ENCODE measurements at regions of chr16 and their contacts with region 1.

Region 1: DNA sequence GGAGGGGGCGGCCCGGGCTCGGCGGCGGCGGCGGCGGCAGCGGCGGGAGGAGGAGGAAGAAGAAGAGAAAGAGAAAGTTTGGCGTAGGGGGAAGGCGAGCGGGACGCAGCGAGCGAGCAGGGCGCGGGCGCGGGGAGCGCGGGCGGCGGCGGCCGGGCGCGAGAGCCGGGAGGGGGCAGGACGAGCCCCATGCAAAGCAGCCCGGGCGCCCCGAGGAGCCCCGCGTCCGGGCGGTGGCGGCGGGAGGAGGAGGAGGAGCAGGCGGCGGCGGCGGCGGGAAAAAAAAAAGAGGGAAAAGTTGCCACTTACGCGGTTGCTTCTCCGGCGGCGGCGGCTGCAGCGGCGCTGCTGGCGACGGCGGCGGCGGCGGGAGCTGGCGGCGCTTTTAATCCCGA is 10.3 kb upstream of the ZFHX3 start:
- DNase-seq: peak; percentile 54
- H3K4me3 ChIP-seq: peak overlapping the region; percentile 55 to 64 (median 61)
- H3K27ac ChIP-seq: no peak overlapping the region
- H3K4me1 ChIP-seq: peaks cover 47% of the 10 kb centered on the region
- H3K27me3 ChIP-seq: no peaks in the 10 kb centered on the region
- CTCF ChIP-seq: no peak

Region 2: GRCh38 chr16:72664509-72665225 is 393.6 kb before region 1 on chr16:
- CTCF ChIA-PET with region 1: no interaction called
- dilution Hi-C with region 1: no loop called
- in situ Hi-C with region 1: no loop called
- intact Hi-C with region 1: loop called (anchors 5 kb)
- DNase-seq: peak; percentile 98
- H3K4me3 ChIP-seq: peak overlapping the region; percentile 74 to 85 (median 81)
- H3K27ac ChIP-seq: peak overlapping the region; percentile 86
- H3K4me1 ChIP-seq: peaks cover 10% of the 10 kb centered on the region
- H3K27me3 ChIP-seq: no peaks in the 10 kb centered on the region
- CTCF ChIP-seq: no peak

Region 3: GRCh38 chr16:72894293-72895151 is 163.7 kb before region 1 on chr16:
- CTCF ChIA-PET with region 1: no interaction called
- dilution Hi-C with region 1: no loop called
- in situ Hi-C with region 1: no loop called
- intact Hi-C with region 1: no loop called
- DNase-seq: no peak
- H3K4me3 ChIP-seq: no peak overlapping the region
- H3K27ac ChIP-seq: no peak overlapping the region
- H3K4me1 ChIP-seq: peaks cover 5% of the 10 kb centered on the region
- H3K27me3 ChIP-seq: no peaks in the 10 kb centered on the region
- CTCF ChIP-seq: no peak